Mammary epithelial cell (primary cell): ENCODE measurements at regions of chr19 and their contacts with region 1.

Region 1: DNA sequence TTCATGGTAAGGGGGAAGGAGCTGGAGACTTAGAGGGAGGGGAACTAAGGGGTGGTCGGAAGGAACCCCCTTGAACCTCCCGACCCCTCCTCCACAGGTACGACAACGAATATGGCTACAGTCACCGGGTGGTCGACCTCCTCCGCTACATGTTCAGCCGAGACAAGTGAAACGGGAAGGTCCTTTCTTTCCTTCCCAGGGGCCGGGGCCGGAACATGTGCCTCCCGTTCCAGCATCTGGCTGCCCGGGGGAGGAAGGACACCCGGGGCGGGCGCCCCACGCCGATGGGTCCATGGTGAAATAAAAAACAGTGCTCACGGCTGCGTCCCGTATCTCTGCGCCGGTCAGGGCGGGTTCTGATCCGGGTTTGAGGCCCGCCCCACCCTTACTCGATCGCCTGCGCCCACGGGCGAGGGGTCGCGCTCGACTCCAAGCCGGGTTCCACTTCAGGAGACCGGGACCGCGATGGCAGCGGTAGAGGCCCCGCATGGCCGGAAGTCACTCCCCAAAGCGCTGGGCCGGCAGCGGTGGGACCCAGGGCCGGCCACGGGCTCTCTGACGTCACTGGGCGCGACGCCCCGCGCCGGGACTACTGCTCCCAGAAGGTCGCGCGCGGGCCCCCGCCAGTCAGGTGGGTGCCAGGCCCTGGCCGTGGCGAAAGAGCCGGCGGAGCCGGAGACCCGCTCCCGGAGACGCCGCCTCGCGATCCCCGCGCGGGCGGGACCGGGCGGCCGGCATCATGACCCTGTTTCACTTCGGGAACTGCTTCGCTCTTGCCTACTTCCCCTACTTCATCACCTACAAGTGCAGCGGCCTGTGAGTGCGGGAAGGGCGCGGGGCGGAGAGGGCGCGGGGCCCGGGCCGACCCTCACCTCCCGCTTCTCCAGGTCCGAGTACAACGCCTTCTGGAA is at the start of gene TMEM147:
- DNase-seq: peak; percentile 84
- H3K4me3 ChIP-seq: peak within 1 kb of the TSS; percentile 88 to 90 (median 89)
- H3K27ac ChIP-seq: peak within 1 kb of the TSS; percentile 84
- H3K4me1 ChIP-seq: peaks cover 7% of the 10 kb centered on the region
- H3K27me3 ChIP-seq: no peaks in the 10 kb centered on the region
- CTCF ChIP-seq: no peak
- total RNA-seq, gene TMEM147: 79.4 to 99.0 TPM

Region 2: GRCh38 chr19:35518313-35518712 is 26.9 kb before region 1 on chr19:
- CTCF ChIA-PET with region 1: no interaction called
- dilution Hi-C with region 1: no loop called
- in situ Hi-C with region 1: loop called in 1 of 2 experiments (anchors 5 kb)
- intact Hi-C with region 1: loop called (anchors 2 kb)
- DNase-seq: peak; percentile 79
- H3K4me3 ChIP-seq: no peak overlapping the region
- H3K27ac ChIP-seq: peak overlapping the region; percentile 39
- H3K4me1 ChIP-seq: peaks cover 33% of the 10 kb centered on the region
- H3K27me3 ChIP-seq: no peaks in the 10 kb centered on the region
- CTCF ChIP-seq: no peak

Region 3: GRCh38 chr19:35612559-35613321 is 67.5 kb after region 1 on chr19 and contains the start of gene HAUS5:
- CTCF ChIA-PET with region 1: no interaction called
- dilution Hi-C with region 1: no loop called
- in situ Hi-C with region 1: no loop called
- intact Hi-C with region 1: loop called (anchors 5 kb)
- DNase-seq: peak; percentile 93
- H3K4me3 ChIP-seq: peak within 1 kb of the TSS; percentile 70 to 74 (median 73)
- H3K27ac ChIP-seq: peak within 1 kb of the TSS; percentile 85
- H3K4me1 ChIP-seq: peaks cover 4% of the 10 kb centered on the region
- H3K27me3 ChIP-seq: no peaks in the 10 kb centered on the region
- CTCF ChIP-seq: no peak
- total RNA-seq, gene HAUS5: 6.5 to 28.0 TPM

Region 4: GRCh38 chr19:35716801-35717666 is 171.8 kb after region 1 on chr19:
- CTCF ChIA-PET with region 1: no interaction called
- dilution Hi-C with region 1: no loop called
- in situ Hi-C with region 1: loop called in 1 of 2 experiments (anchors 10 kb)
- intact Hi-C with region 1: loop called (anchors 1 kb)
- DNase-seq: peak; percentile 79
- H3K4me3 ChIP-seq: peak overlapping the region; percentile 90 to 94 (median 91)
- H3K27ac ChIP-seq: peak overlapping the region; percentile 52
- H3K4me1 ChIP-seq: peaks cover 23% of the 10 kb centered on the region
- H3K27me3 ChIP-seq: no peaks in the 10 kb centered on the region
- CTCF ChIP-seq: peak; percentile 55 to 79

Region 5: DNA sequence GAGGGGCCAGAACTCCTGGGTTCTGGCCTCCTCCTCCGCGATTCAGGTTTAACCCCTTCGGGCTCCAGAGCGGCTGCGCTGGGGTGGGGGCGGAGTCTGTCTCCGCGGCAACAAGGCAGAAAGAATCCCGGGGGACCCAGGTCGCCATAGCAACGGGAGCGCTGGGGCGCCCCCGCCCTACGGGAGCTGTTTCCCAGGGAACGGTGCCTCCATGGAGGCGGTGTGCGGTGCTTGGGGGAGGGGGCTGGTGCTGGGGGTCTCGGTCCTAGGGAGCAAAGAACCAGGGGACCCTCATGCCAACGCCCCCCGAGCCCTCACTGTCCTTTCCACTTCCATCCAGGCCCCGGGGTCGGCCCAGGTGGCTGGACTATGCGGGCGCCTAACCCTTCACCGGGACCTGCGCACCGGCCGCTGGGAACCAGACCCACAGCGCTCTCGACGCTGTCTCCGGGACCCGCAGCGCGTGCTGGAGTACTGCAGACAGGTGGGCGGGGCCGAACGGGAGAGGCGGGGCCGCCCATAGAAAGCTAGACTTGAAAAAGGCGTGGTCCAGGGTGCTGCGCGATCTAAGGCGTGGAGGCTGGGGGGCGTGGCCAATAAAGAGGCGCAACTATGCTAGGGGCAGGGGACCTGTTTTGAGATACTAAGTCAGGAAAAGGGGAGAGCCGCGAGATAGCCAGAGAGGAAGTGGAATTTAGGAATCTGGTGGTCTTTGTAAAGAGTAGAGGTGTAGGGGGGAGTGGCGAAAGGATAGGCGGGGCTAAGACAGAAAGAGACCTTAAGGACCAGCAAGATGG is 324.3 kb after region 1 on chr19:
- CTCF ChIA-PET with region 1: no interaction called
- dilution Hi-C with region 1: no loop called
- in situ Hi-C with region 1: no loop called
- intact Hi-C with region 1: no loop called
- DNase-seq: peak; percentile 60
- H3K4me3 ChIP-seq: peak overlapping the region in 1 of 3 experiments; percentile 13
- H3K27ac ChIP-seq: no peak overlapping the region
- H3K4me1 ChIP-seq: peaks cover 13% of the 10 kb centered on the region
- H3K27me3 ChIP-seq: no peaks in the 10 kb centered on the region
- CTCF ChIP-seq: no peak